GM12878 (cell line): ENCODE measurements at regions of chr10 and their contacts with region 1.

Region 1: GRCh38 chr10:6401562-6402348 is 178.3 kb downstream of the PRKCQ start:
- DNase-seq: peak; percentile 37
- ATAC-seq: peak; percentile 92
- H3K4me3 ChIP-seq: no peak overlapping the region
- H3K27ac ChIP-seq: no peak overlapping the region
- H3K4me1 ChIP-seq: no peaks in the 10 kb centered on the region
- H3K27me3 ChIP-seq: peaks cover 0 to 5% of the 10 kb centered on the region in 2 experiments; a peak in 3 of 4 replicates
- CTCF ChIP-seq: peak; percentile 69 to 88 (median 77)
- EP300 ChIP-seq: no peak
- POLR2A ChIP-seq: no peak
- RAD21 ChIP-seq: peak; percentile 98

Region 2: DNA sequence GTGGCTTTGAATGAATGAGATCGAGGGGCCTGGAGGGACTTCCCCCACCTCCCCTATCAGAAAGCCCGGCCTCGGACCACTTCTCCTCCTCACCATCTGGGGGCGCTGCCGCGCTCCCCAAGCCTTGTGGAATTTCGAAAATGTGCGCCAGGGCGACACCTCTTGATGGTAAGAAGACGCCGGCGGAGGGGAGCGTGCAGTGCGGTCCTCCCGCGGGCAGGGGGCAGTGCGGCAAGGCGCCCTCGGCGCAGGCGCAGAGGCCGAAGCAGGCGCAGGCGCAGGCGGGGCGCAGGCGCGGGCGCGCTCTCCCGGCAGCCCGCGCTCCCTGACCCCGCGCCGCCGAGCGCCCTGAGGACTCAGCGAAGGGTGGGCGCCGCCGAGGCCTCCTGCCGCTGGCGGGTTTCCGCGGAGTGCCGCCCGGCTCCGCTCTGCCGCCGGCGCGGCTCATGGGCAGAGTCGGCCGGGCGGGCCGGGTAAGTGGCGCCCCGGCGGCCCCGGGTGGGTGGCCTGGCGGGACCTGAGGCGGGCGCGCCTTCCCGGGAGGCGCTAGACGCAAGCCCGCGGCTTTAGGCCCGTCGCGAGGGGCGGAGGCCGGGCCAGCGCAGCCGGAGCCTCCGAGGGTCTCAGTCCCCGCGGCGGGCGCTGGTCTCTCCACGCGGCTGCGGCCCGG is 312.9 kb before region 1 on chr10 and contains the start of gene RBM17:
- CTCF ChIA-PET with region 1: interaction called, 40 read pairs
- POLR2A ChIA-PET with region 1: interaction called, 4 read pairs
- RAD21 ChIA-PET with region 1: interaction called, 27 read pairs
- SMC1A ChIA-PET with region 1: interaction called, 31 read pairs
- in situ Hi-C with region 1: no loop called
- intact Hi-C with region 1: loop called (anchors 1 kb)
- DNase-seq: peak; percentile 82
- ATAC-seq: peak; percentile 88
- H3K4me3 ChIP-seq: peak within 1 kb of the TSS; percentile 99
- H3K27ac ChIP-seq: peak within 1 kb of the TSS; percentile 81
- H3K4me1 ChIP-seq: peaks cover 3% of the 10 kb centered on the region; the same call in 1 of the 2 replicates
- H3K27me3 ChIP-seq: no peaks in the 10 kb centered on the region
- CTCF ChIP-seq: peak; percentile 100; a peak in 5 of 6 replicates
- EP300 ChIP-seq: no peak; a peak in 1 of 4 replicates
- POLR2A ChIP-seq: peak; percentile 85
- RAD21 ChIP-seq: peak; percentile 95
- polyA plus RNA-seq, gene RBM17: 28.4 to 45.0 TPM

Region 3: DNA sequence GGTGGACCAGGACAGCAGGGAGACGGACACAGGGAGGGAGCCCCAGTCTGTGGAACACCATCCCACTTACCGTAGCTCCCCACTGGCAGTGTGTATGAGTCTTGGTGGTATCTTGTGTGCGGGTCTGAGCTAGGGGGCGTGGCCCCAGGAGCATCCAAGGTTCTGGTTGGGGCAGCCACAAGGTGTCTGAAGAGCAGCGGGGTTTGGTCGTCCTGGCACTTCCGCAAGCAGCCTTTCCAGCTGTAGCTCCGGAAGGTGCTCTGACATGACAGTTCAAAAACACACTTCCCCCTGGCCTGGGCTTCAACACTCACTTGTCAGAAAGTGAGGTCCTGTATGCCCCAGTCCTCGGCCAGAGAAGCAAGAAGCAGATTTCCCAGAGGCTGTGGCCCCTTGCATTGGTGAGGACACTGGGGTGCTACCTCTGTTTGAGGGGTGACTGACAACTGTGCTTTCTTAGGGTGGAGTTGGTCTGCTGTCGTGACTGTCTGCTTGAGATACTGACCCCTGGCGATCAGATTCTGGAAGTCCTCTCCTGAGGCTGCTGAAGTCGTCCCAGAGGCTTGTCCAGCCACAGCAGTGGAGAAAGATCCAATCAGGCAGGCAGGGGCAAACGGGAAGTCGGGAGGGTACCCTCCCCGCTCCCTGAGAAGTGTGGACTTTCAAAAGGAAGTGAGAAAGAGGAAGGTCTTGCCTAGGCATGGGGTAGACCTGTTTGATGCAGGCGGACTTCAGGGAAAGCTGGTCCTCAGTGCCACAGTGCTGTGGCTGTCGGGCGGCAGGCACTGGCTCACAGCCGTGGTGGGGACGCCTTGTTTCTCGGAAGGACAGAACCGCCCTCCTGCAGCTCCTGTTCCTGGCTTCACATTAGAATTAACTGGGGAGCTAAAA is 250.4 kb before region 1 on chr10:
- CTCF ChIA-PET with region 1: interaction called, 30 read pairs
- POLR2A ChIA-PET with region 1: no interaction called
- RAD21 ChIA-PET with region 1: interaction called, 25 read pairs
- SMC1A ChIA-PET with region 1: interaction called, 18 read pairs
- in situ Hi-C with region 1: no loop called
- intact Hi-C with region 1: no loop called
- DNase-seq: peak; percentile 51
- ATAC-seq: peak; percentile 86
- H3K4me3 ChIP-seq: peak overlapping the region; percentile 9
- H3K27ac ChIP-seq: peak overlapping the region; percentile 8; the same call in 1 of the 2 replicates
- H3K4me1 ChIP-seq: peaks cover 25% of the 10 kb centered on the region
- H3K27me3 ChIP-seq: no peaks in the 10 kb centered on the region
- CTCF ChIP-seq: peak; percentile 71 to 82 (median 81)
- EP300 ChIP-seq: no peak
- POLR2A ChIP-seq: no peak
- RAD21 ChIP-seq: peak; percentile 61

Region 4: DNA sequence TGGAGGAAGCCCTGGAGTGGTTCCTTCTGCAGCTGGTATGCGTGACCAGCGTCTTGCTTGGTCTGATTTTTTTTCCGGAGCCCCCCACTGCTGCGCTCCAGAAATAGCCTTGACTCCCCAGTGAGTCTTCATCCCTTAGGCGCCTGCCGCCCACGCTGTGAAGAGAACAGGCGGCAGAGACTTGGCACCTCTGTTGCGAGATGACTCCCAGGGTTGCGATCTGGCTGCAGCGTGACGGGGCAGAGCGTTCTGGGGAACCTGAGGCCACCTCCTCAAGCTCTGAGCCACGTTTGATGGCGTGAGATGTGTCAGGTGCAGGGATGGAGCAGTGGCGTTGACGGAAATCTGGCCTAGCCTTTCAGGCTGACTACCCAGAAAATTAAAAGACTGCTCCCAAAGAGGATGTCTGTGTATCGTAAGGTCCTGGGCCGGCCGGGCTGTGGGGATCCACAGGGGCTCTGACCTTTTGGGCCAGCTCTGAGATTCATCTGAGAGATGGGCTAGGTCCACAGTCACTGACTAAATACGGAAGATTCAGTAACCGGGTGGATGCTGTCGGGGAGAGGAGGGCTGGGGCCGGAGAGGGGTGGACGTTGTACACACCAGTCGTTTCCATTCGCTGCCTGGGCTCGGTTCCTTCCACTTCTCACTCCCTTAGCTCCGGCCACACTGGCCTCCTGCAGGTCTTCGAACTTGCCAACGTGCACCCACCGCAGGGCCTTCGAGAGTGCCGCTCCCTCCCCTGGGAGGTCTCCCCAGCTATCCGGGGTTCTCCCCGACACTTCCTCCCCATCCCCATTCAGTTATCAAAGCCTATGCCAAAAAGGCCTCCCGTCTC is 165.2 kb before region 1 on chr10:
- CTCF ChIA-PET with region 1: interaction called, 9 read pairs
- POLR2A ChIA-PET with region 1: no interaction called
- RAD21 ChIA-PET with region 1: no interaction called
- SMC1A ChIA-PET with region 1: interaction called, 16 read pairs
- in situ Hi-C with region 1: no loop called
- intact Hi-C with region 1: no loop called
- DNase-seq: no peak
- ATAC-seq: no peak
- H3K4me3 ChIP-seq: no peak overlapping the region
- H3K27ac ChIP-seq: no peak overlapping the region
- H3K4me1 ChIP-seq: no peaks in the 10 kb centered on the region
- H3K27me3 ChIP-seq: no peaks in the 10 kb centered on the region
- CTCF ChIP-seq: no peak
- EP300 ChIP-seq: no peak
- POLR2A ChIP-seq: no peak
- RAD21 ChIP-seq: no peak

Region 5: DNA sequence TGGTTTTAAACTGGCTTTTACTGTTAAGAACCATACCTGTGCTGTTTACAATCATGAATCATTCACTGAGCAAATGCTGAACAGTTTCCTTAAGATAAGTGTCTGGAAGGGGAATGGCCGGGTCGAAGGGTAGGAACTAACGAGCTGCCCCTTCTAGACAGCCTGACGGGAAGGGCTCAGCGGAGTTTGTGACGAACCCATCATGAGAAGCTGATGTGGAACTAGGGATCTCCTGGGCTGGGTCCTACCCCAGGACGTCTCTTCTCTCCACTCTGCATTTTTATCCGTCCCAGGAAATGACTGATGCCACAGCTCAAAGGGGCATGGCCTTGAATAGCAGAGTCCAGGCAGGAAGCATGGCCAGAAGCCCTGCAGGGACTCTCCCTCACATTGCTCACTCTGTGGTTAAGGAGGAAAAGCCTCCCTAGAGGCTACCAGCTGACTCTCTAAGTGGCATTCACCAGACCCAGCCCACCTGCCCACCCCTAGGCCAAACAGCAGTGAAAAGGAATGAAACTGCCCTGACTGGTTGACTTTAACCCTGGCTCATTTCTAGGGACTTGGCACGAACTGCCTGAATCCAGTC is 87.0 kb before region 1 on chr10:
- CTCF ChIA-PET with region 1: interaction called, 15 read pairs
- POLR2A ChIA-PET with region 1: no interaction called
- RAD21 ChIA-PET with region 1: interaction called, 7 read pairs
- SMC1A ChIA-PET with region 1: interaction called, 16 read pairs
- in situ Hi-C with region 1: no loop called
- intact Hi-C with region 1: no loop called
- DNase-seq: no peak
- ATAC-seq: no peak
- H3K4me3 ChIP-seq: no peak overlapping the region
- H3K27ac ChIP-seq: no peak overlapping the region
- H3K4me1 ChIP-seq: no peaks in the 10 kb centered on the region
- H3K27me3 ChIP-seq: 0 out of 4 replicates have a peak, but pooled peaks cover 0 to 4% of the 10 kb centered on the region in 2 experiments
- CTCF ChIP-seq: no peak
- EP300 ChIP-seq: no peak
- POLR2A ChIP-seq: no peak
- RAD21 ChIP-seq: no peak

Region 6: GRCh38 chr10:6416892-6417512 is 15.2 kb after region 1 on chr10:
- CTCF ChIA-PET with region 1: interaction called, 15 read pairs
- POLR2A ChIA-PET with region 1: interaction called, 4 read pairs
- RAD21 ChIA-PET with region 1: interaction called, 10 read pairs
- SMC1A ChIA-PET with region 1: interaction called, 35 read pairs
- in situ Hi-C with region 1: no loop called
- intact Hi-C with region 1: no loop called
- DNase-seq: no peak
- ATAC-seq: peak; percentile 83
- H3K4me3 ChIP-seq: no peak overlapping the region
- H3K27ac ChIP-seq: no peak overlapping the region
- H3K4me1 ChIP-seq: no peaks in the 10 kb centered on the region
- H3K27me3 ChIP-seq: no peaks in the 10 kb centered on the region; a peak in 2 of 4 replicates
- CTCF ChIP-seq: peak; percentile 65 to 82 (median 68)
- EP300 ChIP-seq: no peak
- POLR2A ChIP-seq: no peak
- RAD21 ChIP-seq: peak; percentile 87

Region 7: GRCh38 chr10:6542999-6543430 is 141.3 kb after region 1 on chr10:
- CTCF ChIA-PET with region 1: no interaction called
- POLR2A ChIA-PET with region 1: no interaction called
- RAD21 ChIA-PET with region 1: no interaction called
- SMC1A ChIA-PET with region 1: no interaction called
- in situ Hi-C with region 1: no loop called
- intact Hi-C with region 1: no loop called
- DNase-seq: no peak
- ATAC-seq: peak; percentile 73
- H3K4me3 ChIP-seq: no peak overlapping the region
- H3K27ac ChIP-seq: no peak overlapping the region
- H3K4me1 ChIP-seq: peaks cover 6% of the 10 kb centered on the region
- H3K27me3 ChIP-seq: peaks cover under 1% of the 10 kb centered on the region in 2 experiments; a peak in 2 of 4 replicates
- CTCF ChIP-seq: no peak
- EP300 ChIP-seq: no peak
- POLR2A ChIP-seq: no peak
- RAD21 ChIP-seq: no peak

Region 8: GRCh38 chr10:6607778-6608177 is 206.0 kb after region 1 on chr10:
- CTCF ChIA-PET with region 1: no interaction called
- POLR2A ChIA-PET with region 1: no interaction called
- RAD21 ChIA-PET with region 1: no interaction called
- SMC1A ChIA-PET with region 1: no interaction called
- in situ Hi-C with region 1: no loop called
- intact Hi-C with region 1: no loop called
- DNase-seq: no peak
- ATAC-seq: no peak
- H3K4me3 ChIP-seq: no peak overlapping the region
- H3K27ac ChIP-seq: no peak overlapping the region
- H3K4me1 ChIP-seq: no peaks in the 10 kb centered on the region
- H3K27me3 ChIP-seq: peaks cover 0 to 1% of the 10 kb centered on the region in 2 experiments; a peak in 2 of 4 replicates
- CTCF ChIP-seq: no peak
- EP300 ChIP-seq: no peak
- POLR2A ChIP-seq: no peak
- RAD21 ChIP-seq: no peak

Region 9: DNA sequence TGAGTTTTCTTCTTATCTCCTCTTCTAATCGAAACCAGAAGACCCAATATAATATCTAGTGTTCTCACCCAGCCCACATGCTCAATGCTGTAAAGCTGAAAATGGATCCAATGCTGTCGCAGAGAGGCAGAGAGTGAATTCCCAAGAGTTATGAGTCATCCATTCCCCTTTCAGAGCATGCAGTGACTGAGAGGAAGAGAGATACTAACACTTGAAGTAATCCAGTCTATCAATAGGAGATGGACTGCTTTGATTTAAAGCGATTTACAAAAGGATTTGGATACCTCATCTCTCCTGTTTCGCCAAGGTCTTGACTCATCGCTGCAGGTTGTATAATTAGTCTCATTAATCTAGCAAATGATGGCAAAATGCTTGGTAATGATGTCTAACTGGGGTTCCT is 219.8 kb after region 1 on chr10:
- CTCF ChIA-PET with region 1: no interaction called
- POLR2A ChIA-PET with region 1: no interaction called
- RAD21 ChIA-PET with region 1: no interaction called
- SMC1A ChIA-PET with region 1: no interaction called
- in situ Hi-C with region 1: no loop called
- intact Hi-C with region 1: no loop called
- DNase-seq: no peak
- ATAC-seq: no peak
- H3K4me3 ChIP-seq: no peak overlapping the region
- H3K27ac ChIP-seq: no peak overlapping the region
- H3K4me1 ChIP-seq: no peaks in the 10 kb centered on the region
- H3K27me3 ChIP-seq: no peaks in the 10 kb centered on the region
- CTCF ChIP-seq: no peak
- EP300 ChIP-seq: no peak
- POLR2A ChIP-seq: no peak
- RAD21 ChIP-seq: no peak